Activated T-helper 1 cell treated with anti-CD3 and anti-CD28 coated beads, Interleukin-12 subunit alpha, Interleukin-12 subunit beta, Interleukin-2, Interleukin-4 antibody, amounts not matched to agents 30 ng/mL and 10 ng/mL and 1 ng/mL, durations not matched to agents 14 hours and 24 hours and 36 hours (primary cell): ENCODE measurements at regions of chr2 and their contacts with region 1.

Region 1: GRCh38 chr2:9753276-9753600 is 90.0 kb upstream of the TAF1B start:
- DNase-seq: peak; percentile 45
- H3K4me3 Mint-ChIP-seq: peak overlapping the region; percentile 77
- H3K27ac Mint-ChIP-seq: peak overlapping the region; percentile 96
- H3K4me1 Mint-ChIP-seq: peaks cover 70% of the 10 kb centered on the region
- H3K27me3 Mint-ChIP-seq: peaks cover 34% of the 10 kb centered on the region

Region 2: GRCh38 chr2:9474361-9474967 is 278.8 kb before region 1 on chr2 and contains the start of gene IAH1:
- intact Hi-C with region 1: loop called (anchors 1 kb)
- DNase-seq: peak; percentile 70
- H3K4me3 Mint-ChIP-seq: peak within 1 kb of the TSS; percentile 84
- H3K27ac Mint-ChIP-seq: peak within 1 kb of the TSS; percentile 84
- H3K4me1 Mint-ChIP-seq: peaks cover 48% of the 10 kb centered on the region
- H3K27me3 Mint-ChIP-seq: no peaks in the 10 kb centered on the region
- total RNA-seq, gene IAH1: 78.6 and 89.3 TPM in 2 replicates

Region 3: DNA sequence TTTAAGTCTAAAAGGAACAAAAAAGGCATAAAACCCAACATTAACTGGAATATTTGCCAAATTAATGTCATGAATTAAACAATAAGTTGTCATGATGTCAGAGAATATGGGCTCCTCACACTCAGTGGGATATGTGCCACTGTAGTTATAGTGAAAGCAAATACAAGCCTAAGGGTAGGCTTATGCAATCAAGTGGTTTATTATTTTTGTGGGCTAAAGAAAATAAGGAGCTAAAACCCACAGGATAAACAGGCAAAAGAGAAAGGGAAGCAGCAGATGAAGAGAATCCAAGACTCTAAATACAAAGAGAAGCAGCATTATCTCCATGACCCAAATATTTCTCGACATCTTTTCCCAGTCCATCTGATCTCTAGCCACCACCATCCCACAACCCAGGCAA is 139.9 kb before region 1 on chr2:
- intact Hi-C with region 1: loop called (anchors 1 kb)
- DNase-seq: no peak
- H3K4me3 Mint-ChIP-seq: no peak overlapping the region
- H3K27ac Mint-ChIP-seq: no peak overlapping the region
- H3K4me1 Mint-ChIP-seq: peaks cover 92% of the 10 kb centered on the region
- H3K27me3 Mint-ChIP-seq: no peaks in the 10 kb centered on the region

Region 4: GRCh38 chr2:9703085-9703641 is 50.1 kb before region 1 on chr2:
- intact Hi-C with region 1: loop called (anchors 1 kb)
- DNase-seq: peak; percentile 79
- H3K4me3 Mint-ChIP-seq: no peak overlapping the region
- H3K27ac Mint-ChIP-seq: peak overlapping the region; percentile 74
- H3K4me1 Mint-ChIP-seq: peaks cover 48% of the 10 kb centered on the region
- H3K27me3 Mint-ChIP-seq: no peaks in the 10 kb centered on the region

Region 5: GRCh38 chr2:9738535-9739496 is 14.4 kb before region 1 on chr2:
- intact Hi-C with region 1: loop called (anchors 1 kb)
- DNase-seq: no peak
- H3K4me3 Mint-ChIP-seq: peak overlapping the region; percentile 69
- H3K27ac Mint-ChIP-seq: peak overlapping the region; percentile 66
- H3K4me1 Mint-ChIP-seq: peaks cover 38% of the 10 kb centered on the region
- H3K27me3 Mint-ChIP-seq: peaks cover 4% of the 10 kb centered on the region

Region 6: GRCh38 chr2:9770308-9771100 is 17.3 kb after region 1 on chr2:
- intact Hi-C with region 1: no loop called
- DNase-seq: peak; percentile 38
- H3K4me3 Mint-ChIP-seq: no peak overlapping the region
- H3K27ac Mint-ChIP-seq: peak overlapping the region; percentile 58
- H3K4me1 Mint-ChIP-seq: peaks cover 28% of the 10 kb centered on the region
- H3K27me3 Mint-ChIP-seq: peaks cover 4% of the 10 kb centered on the region

Region 7: DNA sequence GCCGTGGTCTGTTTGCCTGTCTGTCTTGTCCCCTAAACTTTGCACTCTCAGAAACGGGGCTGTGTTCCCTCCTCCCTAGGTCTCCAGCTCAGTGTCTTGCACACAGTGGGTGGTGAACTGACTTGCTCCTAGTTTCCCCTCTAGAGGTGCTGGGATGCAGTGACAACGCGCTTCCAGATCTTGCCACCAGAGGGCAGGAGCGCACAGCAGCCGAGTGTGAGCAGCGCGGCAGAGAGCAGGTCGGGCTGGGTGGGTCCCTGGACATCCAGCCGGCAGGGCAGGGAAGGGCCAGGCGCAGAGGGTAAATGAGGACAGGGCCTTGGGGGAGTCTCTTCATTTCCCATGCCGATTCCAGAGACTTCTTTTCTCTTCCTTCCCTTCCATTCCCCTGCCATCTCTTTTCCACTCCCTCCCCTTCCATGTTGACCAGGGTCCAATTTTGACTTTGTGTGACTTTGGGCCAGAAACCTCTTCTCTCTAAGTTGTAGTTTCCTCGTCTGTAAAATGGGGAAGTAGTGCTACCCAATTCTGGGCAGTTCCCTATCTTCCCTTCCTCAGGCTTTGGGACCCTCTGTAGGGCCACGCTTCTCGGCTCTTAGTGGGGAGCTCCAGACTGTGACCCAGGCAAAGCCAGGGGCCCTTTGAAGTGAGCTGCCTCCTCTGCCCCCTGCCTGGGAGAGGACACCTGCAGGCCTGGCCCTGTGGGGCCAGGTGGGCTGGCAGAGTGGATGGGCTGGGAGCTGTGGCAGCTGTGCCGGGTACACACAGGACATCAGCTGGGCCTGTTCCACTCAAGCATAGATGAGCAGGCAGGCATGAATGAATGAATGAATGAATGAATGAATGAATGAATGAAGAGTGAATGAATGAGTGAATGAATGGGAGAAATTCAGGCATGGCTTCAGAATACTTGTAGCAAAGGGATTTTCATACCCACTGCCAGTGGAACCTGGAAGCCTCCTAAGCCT is 46.7 kb after region 1 on chr2:
- intact Hi-C with region 1: loop called (anchors 2 kb)
- DNase-seq: peak; percentile 81
- H3K4me3 Mint-ChIP-seq: peak overlapping the region; percentile 66
- H3K27ac Mint-ChIP-seq: peak overlapping the region; percentile 85
- H3K4me1 Mint-ChIP-seq: peaks cover 37% of the 10 kb centered on the region
- H3K27me3 Mint-ChIP-seq: peaks cover 7% of the 10 kb centered on the region